ENCODE measurements at regions of chr1 and their contacts with region 1.

Region 1: GRCh38 chr1:222455188-222455879 is 92.6 kb downstream of the HHIPL2 start:
- DNase-seq: peak; percentile 87
- H3K4me3 ChIP-seq: peak overlapping the region; percentile 14
- H3K27ac ChIP-seq: peak overlapping the region; percentile 40
- H3K27me3 ChIP-seq: no peaks in the 10 kb centered on the region
- CTCF ChIP-seq: peak; percentile 95

Region 2: DNA sequence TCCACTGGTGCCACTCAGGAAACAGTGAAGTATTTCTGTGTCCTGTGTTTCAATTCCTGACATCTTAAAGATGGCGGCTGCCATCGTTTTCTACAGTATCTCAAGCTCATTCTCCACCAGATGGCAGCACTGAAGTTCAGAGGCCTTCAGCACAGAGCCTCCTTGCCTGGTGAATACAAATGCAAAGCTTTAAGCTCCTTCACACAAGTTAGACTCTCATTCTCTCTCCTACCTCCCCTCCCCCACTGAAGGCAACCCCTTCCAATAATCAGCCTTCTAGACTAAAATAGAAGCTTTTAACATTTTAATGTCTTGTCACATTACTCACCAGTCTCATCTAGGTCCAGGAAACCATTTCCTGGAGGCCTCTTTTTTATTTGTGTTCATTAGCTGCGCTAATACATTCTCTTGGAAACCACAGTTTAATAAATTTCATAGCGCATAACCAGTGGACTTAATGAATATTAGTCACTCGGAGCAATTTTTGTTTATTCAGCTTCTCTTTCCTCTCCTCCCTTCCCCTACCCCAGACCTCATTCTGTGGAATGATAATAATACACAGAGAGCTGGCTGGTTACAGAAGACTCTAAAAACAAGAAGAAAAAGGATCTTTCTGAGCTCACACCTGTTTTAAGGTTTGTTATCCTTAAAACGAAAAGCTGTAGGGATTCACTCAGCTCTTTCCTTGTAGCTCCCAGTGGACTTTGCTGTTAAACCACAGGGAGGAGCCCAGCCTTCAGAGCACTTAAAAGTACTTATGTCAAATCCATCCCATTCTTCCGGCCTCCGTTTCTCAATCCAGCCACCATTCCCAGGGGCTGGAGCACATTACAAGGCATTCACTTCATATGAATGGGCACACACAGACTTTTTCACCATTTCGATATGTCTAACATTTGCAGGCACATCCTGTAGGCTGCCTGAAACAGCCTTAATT is 1191.2 kb before region 1 on chr1:
- CTCF ChIA-PET with region 1: interaction called, 21 read pairs
- POLR2A ChIA-PET with region 1: no interaction called
- DNase-seq: peak; percentile 56
- H3K4me3 ChIP-seq: no peak overlapping the region
- H3K27ac ChIP-seq: no peak overlapping the region
- H3K27me3 ChIP-seq: peaks cover 2% of the 10 kb centered on the region
- CTCF ChIP-seq: peak; percentile 64

Region 3: DNA sequence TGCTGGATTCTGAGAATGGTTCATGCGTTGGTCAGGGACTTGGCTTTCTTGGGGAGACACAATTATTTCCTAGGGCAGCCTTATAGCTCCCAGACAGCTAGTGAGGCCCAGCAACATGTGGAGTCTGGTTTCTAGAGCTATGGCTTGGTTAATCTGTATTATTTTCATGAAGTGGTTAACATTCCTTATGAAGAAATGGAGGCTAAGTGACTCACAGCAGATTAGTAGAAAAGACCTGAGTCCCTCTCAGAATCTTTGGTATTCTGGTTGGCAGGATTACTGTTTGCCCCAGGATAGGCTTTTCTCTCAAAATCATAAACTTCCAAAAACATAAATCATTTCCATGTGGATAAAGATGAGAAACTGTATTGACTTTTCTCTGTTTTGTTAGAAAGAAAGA is 755.8 kb before region 1 on chr1:
- CTCF ChIA-PET with region 1: interaction called, 14 read pairs
- POLR2A ChIA-PET with region 1: no interaction called
- DNase-seq: no peak
- H3K4me3 ChIP-seq: no peak overlapping the region
- H3K27ac ChIP-seq: peak overlapping the region; percentile 22
- H3K27me3 ChIP-seq: no peaks in the 10 kb centered on the region
- CTCF ChIP-seq: no peak

Region 4: DNA sequence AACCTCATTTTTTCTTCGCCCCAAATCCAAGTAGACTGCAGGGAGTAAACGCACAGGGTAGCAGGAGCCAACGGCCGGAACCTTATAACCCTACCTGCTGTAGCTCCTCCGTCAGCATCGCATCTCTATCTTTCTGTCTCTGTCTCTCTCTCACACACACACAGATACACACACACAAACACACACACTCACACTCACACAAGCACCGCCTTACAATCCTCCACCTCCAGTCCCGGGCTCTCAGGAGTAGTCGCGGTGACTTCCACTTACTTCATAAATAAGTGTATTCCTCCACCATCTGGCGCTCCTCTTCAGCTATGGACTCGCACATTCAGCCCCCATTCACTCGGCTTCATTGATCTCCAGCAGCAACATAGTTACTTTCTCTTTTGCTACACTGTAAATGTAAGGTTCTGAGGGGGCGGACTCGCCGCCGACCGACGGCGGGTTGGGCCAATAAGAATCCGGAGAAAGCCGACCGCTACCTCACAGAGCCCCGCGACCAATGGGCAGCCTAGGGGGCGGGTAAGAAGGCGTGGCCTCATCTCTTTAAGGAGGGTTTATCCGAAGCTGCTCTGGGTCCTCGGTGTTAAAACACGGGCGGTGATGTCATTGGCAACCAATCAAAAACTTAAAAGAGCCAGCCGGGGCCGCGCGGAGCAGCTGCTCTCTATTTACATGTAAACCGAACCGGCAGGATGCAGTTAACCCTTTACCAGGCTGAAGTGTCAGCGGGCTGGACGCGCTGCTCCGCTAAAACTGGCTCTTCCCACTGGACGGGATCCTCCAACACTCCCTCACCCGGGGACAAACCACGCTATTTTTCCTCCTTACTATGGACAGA is 713.4 kb before region 1 on chr1 and contains the start of gene DUSP10:
- CTCF ChIA-PET with region 1: interaction called, 25 read pairs
- POLR2A ChIA-PET with region 1: interaction called, 18 read pairs
- DNase-seq: peak; percentile 100
- H3K4me3 ChIP-seq: peak within 1 kb of the TSS; percentile 95
- H3K27ac ChIP-seq: peak within 1 kb of the TSS; percentile 97
- H3K27me3 ChIP-seq: no peaks in the 10 kb centered on the region
- CTCF ChIP-seq: no peak
- polyA plus RNA-seq, gene DUSP10: 34.2 and 35.9 TPM in 2 replicates

Region 5: DNA sequence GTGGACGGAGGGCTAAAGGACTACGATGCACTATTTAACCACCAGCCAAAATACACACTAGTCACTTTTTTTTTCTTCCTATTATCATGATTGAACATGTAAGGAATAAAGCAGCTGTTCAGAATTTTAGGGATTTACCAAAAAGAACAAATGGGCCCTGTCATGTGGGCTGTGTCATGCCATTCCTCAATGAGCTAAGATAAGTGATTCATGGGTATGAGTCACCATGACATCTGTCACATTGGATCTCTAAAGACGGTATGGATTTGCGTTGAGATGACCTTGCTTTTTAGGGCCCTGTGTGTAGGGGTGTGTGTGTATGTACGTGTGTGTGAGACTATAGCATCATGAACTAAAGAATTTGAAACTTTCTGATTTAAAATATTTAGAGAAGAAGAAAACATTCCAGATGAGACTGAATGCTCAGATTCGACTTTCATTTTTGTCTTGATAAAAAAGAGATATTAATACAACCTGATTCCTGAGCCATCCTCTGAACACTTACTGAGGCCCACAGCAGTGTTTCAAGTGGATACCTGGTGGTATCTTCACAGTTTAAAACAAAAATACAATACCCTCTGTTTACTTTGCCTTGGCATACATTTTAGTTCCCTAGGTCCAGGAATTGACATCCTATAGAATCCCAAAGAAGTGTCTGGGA is 467.3 kb before region 1 on chr1:
- CTCF ChIA-PET with region 1: interaction called, 10 read pairs
- POLR2A ChIA-PET with region 1: no interaction called
- DNase-seq: peak; percentile 73
- H3K4me3 ChIP-seq: no peak overlapping the region
- H3K27ac ChIP-seq: peak overlapping the region; percentile 23
- H3K27me3 ChIP-seq: no peaks in the 10 kb centered on the region
- CTCF ChIP-seq: no peak

Region 6: DNA sequence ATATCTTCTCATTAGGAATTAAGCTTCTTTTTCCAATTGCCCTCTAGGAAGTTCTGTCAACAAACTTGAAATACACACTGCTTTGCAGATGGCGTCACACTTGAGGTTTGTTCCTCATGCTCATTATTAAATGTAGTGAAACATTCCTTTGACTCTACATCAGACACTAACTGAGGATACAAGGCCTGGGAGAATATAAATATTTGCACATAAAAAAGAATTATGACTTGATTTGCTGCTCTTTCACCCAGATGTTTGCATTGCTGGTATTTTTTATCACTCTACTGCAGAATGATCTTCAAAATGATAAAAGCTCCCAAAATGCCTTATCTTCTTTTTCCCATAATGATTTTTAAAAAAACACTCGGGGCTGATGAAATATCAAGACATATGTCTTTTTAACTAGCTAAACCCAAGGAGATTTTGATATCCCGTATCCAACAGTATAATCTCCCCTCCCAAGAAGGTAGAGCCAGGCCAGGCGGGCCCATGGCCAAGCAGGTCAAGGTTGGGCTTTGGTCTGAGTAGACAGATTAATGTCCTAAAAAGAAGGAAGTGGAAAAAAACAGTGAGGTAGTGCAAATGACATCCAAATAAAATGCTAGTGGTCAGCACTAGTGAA is 172.1 kb before region 1 on chr1:
- CTCF ChIA-PET with region 1: interaction called, 13 read pairs
- POLR2A ChIA-PET with region 1: interaction called, 6 read pairs
- DNase-seq: peak; percentile 92
- H3K4me3 ChIP-seq: no peak overlapping the region
- H3K27ac ChIP-seq: peak overlapping the region; percentile 97
- H3K27me3 ChIP-seq: no peaks in the 10 kb centered on the region
- CTCF ChIP-seq: no peak

Region 7: GRCh38 chr1:222357252-222357651 is 98.1 kb before region 1 on chr1:
- CTCF ChIA-PET with region 1: no interaction called
- POLR2A ChIA-PET with region 1: no interaction called
- DNase-seq: no peak
- H3K4me3 ChIP-seq: no peak overlapping the region
- H3K27ac ChIP-seq: no peak overlapping the region
- H3K27me3 ChIP-seq: no peaks in the 10 kb centered on the region
- CTCF ChIP-seq: no peak

Region 8: GRCh38 chr1:222413436-222413835 is 41.9 kb before region 1 on chr1:
- CTCF ChIA-PET with region 1: no interaction called
- POLR2A ChIA-PET with region 1: no interaction called
- DNase-seq: no peak
- H3K4me3 ChIP-seq: no peak overlapping the region
- H3K27ac ChIP-seq: no peak overlapping the region
- H3K27me3 ChIP-seq: no peaks in the 10 kb centered on the region
- CTCF ChIP-seq: no peak

Region 9: GRCh38 chr1:222634180-222635013 is 179.1 kb after region 1 on chr1:
- CTCF ChIA-PET with region 1: interaction called, 11 read pairs
- POLR2A ChIA-PET with region 1: no interaction called
- DNase-seq: peak; percentile 85
- H3K4me3 ChIP-seq: no peak overlapping the region
- H3K27ac ChIP-seq: no peak overlapping the region
- H3K27me3 ChIP-seq: no peaks in the 10 kb centered on the region
- CTCF ChIP-seq: peak; percentile 85

Measured in AG04450 (cell line).